Activated CD4-positive, alpha-beta T cell treated with anti-CD3 and anti-CD28 coated beads for 36 hours (primary cell): ENCODE measurements at regions of chr15 and their contacts with region 1.

Region 1: DNA sequence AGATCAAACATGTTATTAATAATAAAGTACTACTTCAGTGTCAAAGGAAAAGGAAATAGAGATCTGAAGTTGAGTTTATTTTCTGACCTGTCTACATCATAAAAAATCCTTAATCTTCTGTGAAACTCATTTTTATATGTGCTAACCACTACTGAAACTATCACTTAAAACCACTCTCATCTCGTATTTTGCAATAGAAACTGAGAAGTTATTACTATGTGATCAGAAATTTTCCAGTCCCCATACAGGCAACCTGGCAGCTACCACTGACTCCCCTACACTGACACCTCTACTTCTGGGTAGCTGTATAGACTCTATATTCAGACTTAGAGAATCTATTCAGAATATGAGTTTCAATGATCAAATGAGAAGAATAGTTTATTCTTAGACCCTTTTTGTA is 8.3 kb downstream of the HDGFL3 start:
- DNase-seq: peak; percentile 37
- ATAC-seq: peak; percentile 91
- H3K4me3 Mint-ChIP-seq: no peak overlapping the region
- H3K27ac Mint-ChIP-seq: no peak overlapping the region
- H3K4me1 Mint-ChIP-seq: peaks cover 20% of the 10 kb centered on the region
- H3K27me3 Mint-ChIP-seq: peaks cover 17% of the 10 kb centered on the region

Region 2: GRCh38 chr15:82999905-83000671 is 199.2 kb before region 1 on chr15:
- CTCF ChIA-PET with region 1: no interaction called
- POLR2A ChIA-PET with region 1: no interaction called
- intact Hi-C with region 1: no loop called
- DNase-seq: peak; percentile 41
- ATAC-seq: peak; percentile 89
- H3K4me3 Mint-ChIP-seq: peak overlapping the region; percentile 53
- H3K27ac Mint-ChIP-seq: peak overlapping the region; percentile 63
- H3K4me1 Mint-ChIP-seq: peaks cover 6% of the 10 kb centered on the region
- H3K27me3 Mint-ChIP-seq: no peaks in the 10 kb centered on the region

Region 3: DNA sequence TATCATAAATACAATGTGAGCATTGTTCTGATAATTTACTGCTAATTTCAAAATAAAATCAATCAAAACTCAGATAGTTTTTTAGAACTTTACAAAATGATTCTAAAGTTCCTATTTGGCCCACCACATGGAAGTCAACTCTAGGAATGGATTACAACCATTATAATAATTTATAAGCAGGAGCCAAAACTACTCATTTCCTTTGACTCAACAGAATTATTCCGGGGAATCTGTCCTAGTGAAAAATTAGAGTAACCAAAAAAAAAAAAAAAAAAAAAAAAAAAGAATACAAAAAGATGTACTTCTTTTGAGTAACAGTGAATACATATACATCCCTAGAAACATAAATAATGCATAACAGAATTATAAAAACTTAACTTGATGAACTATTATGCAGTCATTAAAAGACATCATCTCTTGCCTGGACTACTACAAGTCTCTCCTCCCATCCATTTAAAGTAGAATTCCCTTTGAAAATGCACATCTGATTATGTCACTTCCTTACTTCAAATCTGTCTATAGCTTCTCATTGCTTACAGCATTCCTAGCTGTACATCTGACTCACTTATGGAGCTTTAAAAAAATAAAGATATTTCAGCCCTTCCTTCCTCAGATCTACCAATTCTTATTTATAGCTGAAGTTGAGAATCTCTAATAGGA is 35.0 kb before region 1 on chr15:
- CTCF ChIA-PET with region 1: no interaction called
- POLR2A ChIA-PET with region 1: no interaction called
- intact Hi-C with region 1: loop called (anchors 2 kb)
- DNase-seq: no peak
- ATAC-seq: no peak
- H3K4me3 Mint-ChIP-seq: no peak overlapping the region
- H3K27ac Mint-ChIP-seq: peak overlapping the region; percentile 34
- H3K4me1 Mint-ChIP-seq: peaks cover 19% of the 10 kb centered on the region
- H3K27me3 Mint-ChIP-seq: peaks cover 27% of the 10 kb centered on the region

Region 4: GRCh38 chr15:83858820-83859505 is 659.7 kb after region 1 on chr15:
- CTCF ChIA-PET with region 1: no interaction called
- POLR2A ChIA-PET with region 1: no interaction called
- intact Hi-C with region 1: no loop called
- DNase-seq: no peak
- ATAC-seq: no peak
- H3K4me3 Mint-ChIP-seq: no peak overlapping the region
- H3K27ac Mint-ChIP-seq: no peak overlapping the region
- H3K4me1 Mint-ChIP-seq: no peaks in the 10 kb centered on the region
- H3K27me3 Mint-ChIP-seq: peaks cover 12% of the 10 kb centered on the region